T-cell (primary cell): ENCODE measurements at regions of chr4 and their contacts with region 1.

Region 1: GRCh38 chr4:186067757-186068385 is 1.1 kb upstream of the TLR3 start:
- DNase-seq: peak in 20 of 35 experiments; percentile 3 to 57 (median 12)
- ATAC-seq: peak; percentile 59 to 72 (median 67)
- H3K4me3 ChIP-seq: peak overlapping the region in 1 of 2 donors; percentile 64
- H3K4me3 Mint-ChIP-seq: peak overlapping the region; percentile 60 to 82 (median 75)
- H3K27ac ChIP-seq: no peak overlapping the region
- H3K27ac Mint-ChIP-seq: no peak overlapping the region
- H3K4me1 ChIP-seq: peaks cover 4 to 11% of the 10 kb centered on the region in 2 experiments
- H3K4me1 Mint-ChIP-seq: peaks cover 23 to 25% (median 24%) of the 10 kb centered on the region in 3 donors
- H3K27me3 ChIP-seq: no peaks in the 10 kb centered on the region
- H3K27me3 Mint-ChIP-seq: peaks cover 10 to 13% of the 10 kb centered on the region in 2 donors

Region 2: GRCh38 chr4:186037692-186038658 is 29.9 kb before region 1 on chr4:
- CTCF ChIA-PET with region 1: no interaction called
- POLR2A ChIA-PET with region 1: no interaction called
- DNase-seq: peak in 5 of 35 experiments; percentile 7 to 61 (median 8)
- ATAC-seq: peak in 1 of 4 experiments; percentile 45
- H3K4me3 ChIP-seq: no peak overlapping the region
- H3K4me3 Mint-ChIP-seq: no peak overlapping the region
- H3K27ac ChIP-seq: no peak overlapping the region
- H3K27ac Mint-ChIP-seq: no peak overlapping the region
- H3K4me1 ChIP-seq: no peaks in the 10 kb centered on the region
- H3K4me1 Mint-ChIP-seq: no peaks in the 10 kb centered on the region
- H3K27me3 ChIP-seq: peaks cover 0 to 16% of the 10 kb centered on the region in 2 experiments
- H3K27me3 Mint-ChIP-seq: peaks cover 33 to 34% of the 10 kb centered on the region in 2 donors

Region 3: GRCh38 chr4:186088523-186088922 is 20.7 kb after region 1 on chr4:
- CTCF ChIA-PET with region 1: no interaction called
- POLR2A ChIA-PET with region 1: no interaction called
- DNase-seq: no peak
- ATAC-seq: no peak
- H3K4me3 ChIP-seq: no peak overlapping the region
- H3K4me3 Mint-ChIP-seq: no peak overlapping the region
- H3K27ac ChIP-seq: no peak overlapping the region
- H3K27ac Mint-ChIP-seq: no peak overlapping the region
- H3K4me1 ChIP-seq: no peaks in the 10 kb centered on the region
- H3K4me1 Mint-ChIP-seq: no peaks in the 10 kb centered on the region
- H3K27me3 ChIP-seq: no peaks in the 10 kb centered on the region
- H3K27me3 Mint-ChIP-seq: peaks cover 2 to 18% of the 10 kb centered on the region in 2 donors

Region 4: DNA sequence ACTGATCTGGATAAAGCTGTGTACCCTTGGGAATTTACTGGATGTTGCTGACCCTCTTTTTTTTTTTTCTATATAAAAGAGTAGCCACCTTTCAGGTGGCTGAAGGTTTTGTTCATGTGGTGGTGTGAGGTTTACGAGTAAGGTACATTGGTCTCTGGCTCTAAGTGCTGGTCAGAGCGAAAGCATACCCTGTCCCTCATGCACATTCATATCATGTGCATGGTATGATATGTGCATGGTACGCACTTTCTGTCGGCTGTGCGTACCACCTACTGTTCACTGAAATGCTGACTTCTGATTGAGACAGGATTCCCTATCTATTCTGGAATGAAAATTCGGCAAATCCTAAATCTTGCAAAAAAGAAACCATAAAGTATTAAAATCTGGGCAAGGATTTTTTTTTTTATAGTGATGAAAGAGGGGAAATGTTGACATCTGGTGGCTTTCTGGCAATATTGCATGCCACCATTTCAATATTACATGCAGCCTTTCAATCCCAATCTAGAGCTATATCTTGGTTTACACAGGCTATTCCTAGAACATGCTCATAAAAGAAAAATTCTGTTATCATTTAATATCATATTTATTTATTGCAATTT is 69.4 kb after region 1 on chr4:
- CTCF ChIA-PET with region 1: interaction called, 8 to 14 read pairs
- POLR2A ChIA-PET with region 1: no interaction called
- DNase-seq: peak in 1 of 35 experiments; percentile 12
- ATAC-seq: no peak
- H3K4me3 ChIP-seq: no peak overlapping the region
- H3K4me3 Mint-ChIP-seq: no peak overlapping the region
- H3K27ac ChIP-seq: no peak overlapping the region
- H3K27ac Mint-ChIP-seq: no peak overlapping the region
- H3K4me1 ChIP-seq: no peaks in the 10 kb centered on the region
- H3K4me1 Mint-ChIP-seq: no peaks in the 10 kb centered on the region
- H3K27me3 ChIP-seq: peaks cover 2 to 8% of the 10 kb centered on the region in 2 experiments
- H3K27me3 Mint-ChIP-seq: peaks cover 7 to 16% of the 10 kb centered on the region in 2 donors

Region 5: DNA sequence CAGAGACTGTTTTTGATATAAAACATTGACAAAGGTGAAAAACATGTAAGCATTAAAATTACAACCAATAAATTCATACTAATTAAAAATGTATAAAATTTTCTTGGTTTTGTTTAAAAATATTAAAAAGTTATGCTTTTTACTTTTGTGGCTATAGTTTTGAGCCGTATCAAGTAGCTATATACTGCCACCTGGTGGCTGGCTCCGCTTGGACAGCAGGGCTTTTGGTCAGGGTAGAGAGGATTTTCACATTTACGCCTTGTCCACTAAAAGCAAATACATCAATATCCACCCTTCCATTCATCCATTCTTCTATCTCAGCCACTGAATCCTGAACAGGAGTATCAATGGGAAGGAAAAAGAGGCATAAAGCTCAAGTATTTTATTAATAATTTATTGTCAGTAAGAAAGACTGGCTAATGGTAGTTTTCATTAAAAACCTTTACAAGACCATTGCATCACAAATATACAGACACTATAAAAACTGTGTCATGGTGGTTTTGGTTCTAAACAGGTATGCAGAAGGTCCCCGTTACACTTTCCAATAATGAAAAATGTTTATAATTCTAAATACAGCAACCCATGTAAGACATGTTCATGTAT is 519.6 kb after region 1 on chr4:
- CTCF ChIA-PET with region 1: interaction called, 3 to 28 read pairs
- POLR2A ChIA-PET with region 1: no interaction called
- DNase-seq: peak in 31 of 35 experiments; percentile 5 to 67 (median 40)
- ATAC-seq: no peak
- H3K4me3 ChIP-seq: no peak overlapping the region
- H3K4me3 Mint-ChIP-seq: no peak overlapping the region
- H3K27ac ChIP-seq: no peak overlapping the region
- H3K27ac Mint-ChIP-seq: no peak overlapping the region
- H3K4me1 ChIP-seq: no peaks in the 10 kb centered on the region
- H3K4me1 Mint-ChIP-seq: no peaks in the 10 kb centered on the region
- H3K27me3 ChIP-seq: no peaks in the 10 kb centered on the region
- H3K27me3 Mint-ChIP-seq: no peaks in the 10 kb centered on the region